BJ (cell line): ENCODE measurements at regions of chr7 and their contacts with region 1.

Region 1: DNA sequence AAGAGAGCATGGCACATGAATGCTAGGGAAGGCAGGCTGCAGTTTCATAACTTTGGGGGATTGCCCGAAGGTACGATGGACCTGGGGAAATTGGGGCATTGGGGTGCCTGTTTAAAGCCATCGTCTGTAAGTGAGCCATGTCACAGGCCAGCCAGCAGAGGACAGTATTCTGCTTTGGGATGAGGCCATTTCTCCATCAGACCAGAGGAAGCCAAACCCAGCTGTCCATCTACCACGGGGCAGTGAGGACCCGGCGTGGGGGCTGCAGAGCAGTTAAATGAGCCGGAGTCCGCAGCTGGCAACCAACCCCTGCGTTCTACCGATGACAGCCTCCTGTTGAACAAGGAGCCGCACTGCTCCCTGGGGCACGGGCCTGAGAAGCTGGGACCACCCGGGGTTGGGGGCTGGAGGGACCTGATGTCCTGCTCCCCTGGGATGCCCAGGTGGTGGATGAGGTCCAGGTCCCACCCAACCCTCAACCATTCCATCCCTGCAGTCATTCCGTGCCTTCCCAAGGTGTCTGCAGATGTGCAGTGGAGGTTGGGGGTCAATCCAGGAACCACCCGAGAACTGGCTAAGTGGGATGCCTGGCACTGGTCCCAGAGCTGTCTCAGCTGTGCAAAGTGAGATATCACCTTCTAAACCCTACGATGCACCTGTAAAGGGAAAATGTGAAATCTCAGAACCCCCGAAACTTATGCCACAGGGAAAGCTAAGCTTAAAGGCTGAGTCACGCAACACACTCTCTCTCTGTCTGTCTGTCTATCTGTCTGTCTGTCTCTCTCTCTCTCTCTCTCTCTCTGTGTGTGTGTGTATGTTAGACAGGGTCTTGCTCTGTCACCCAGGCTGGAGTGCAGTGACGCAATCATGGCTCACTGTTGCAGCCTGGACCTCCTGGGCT is 12.1 kb upstream of the RHBDD2 start:
- DNase-seq: no peak
- H3K4me3 ChIP-seq: no peak overlapping the region
- H3K27me3 ChIP-seq: no peaks in the 10 kb centered on the region
- CTCF ChIP-seq: peak; percentile 98

Region 2: GRCh38 chr7:76011442-76011861 is 144.7 kb after region 1 on chr7:
- CTCF ChIA-PET with region 1: interaction called, 10 read pairs
- POLR2A ChIA-PET with region 1: no interaction called
- DNase-seq: peak; percentile 45
- H3K4me3 ChIP-seq: no peak overlapping the region
- H3K27me3 ChIP-seq: no peaks in the 10 kb centered on the region
- CTCF ChIP-seq: no peak